Activated CD4-positive, alpha-beta memory T cell treated with anti-CD3 and anti-CD28 coated beads, Interleukin-2, amount 10 ng/mL, durations not matched to agents 7 days and 5 days (primary cell): ENCODE measurements at regions of chr16 and their contacts with region 1.

Region 1: GRCh38 chr16:67935402-67936123 is 1.1 kb downstream of the PSMB10 start:
- DNase-seq: peak; percentile 97
- H3K4me3 Mint-ChIP-seq: peak overlapping the region; percentile 100
- H3K27ac Mint-ChIP-seq: peak overlapping the region; percentile 97
- H3K4me1 Mint-ChIP-seq: peaks cover 44% of the 10 kb centered on the region
- H3K27me3 Mint-ChIP-seq: no peaks in the 10 kb centered on the region

Region 2: DNA sequence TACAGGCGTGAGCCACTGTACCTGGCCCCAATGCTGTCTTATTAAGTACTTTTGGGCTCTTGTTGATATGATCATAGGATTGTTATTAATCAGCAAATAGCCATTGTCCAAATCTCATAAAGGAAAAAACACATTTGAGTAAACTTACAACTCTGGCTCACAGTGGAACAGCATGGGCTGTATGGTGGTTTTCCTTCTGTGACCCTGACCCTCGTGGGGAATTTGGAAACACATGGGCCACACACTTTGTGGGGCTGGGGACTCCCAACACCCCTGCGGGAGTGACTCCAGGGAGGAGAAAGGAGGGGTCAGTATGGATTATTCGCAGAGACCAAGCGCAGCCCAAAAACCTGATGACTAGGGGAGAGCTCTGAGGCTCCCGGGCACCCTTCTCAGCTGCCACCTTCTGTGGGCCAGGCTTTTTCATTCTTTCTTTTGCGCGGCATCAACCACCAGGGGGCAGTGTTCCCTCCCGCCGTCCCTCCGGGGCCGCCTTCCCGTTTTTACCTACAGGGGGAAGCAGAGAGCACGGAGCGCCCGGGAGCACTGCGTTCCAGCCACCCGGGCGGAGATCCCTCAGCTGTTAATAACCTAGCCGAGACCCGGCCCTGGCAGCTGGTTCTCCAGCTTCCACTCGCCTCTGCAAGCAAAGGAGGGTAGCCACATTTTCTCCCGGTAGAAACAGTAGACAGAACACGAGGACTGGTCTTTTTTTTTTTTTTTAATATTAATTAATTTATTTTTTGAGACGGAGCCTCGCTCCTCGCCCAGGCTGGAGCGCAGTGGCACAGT is 119.1 kb before region 1 on chr16:
- CTCF ChIA-PET with region 1: interaction called, 11 read pairs
- POLR2A ChIA-PET with region 1: no interaction called
- DNase-seq: peak; percentile 91
- H3K4me3 Mint-ChIP-seq: no peak overlapping the region
- H3K27ac Mint-ChIP-seq: no peak overlapping the region
- H3K4me1 Mint-ChIP-seq: peaks cover 6% of the 10 kb centered on the region
- H3K27me3 Mint-ChIP-seq: peaks cover 4% of the 10 kb centered on the region

Region 3: DNA sequence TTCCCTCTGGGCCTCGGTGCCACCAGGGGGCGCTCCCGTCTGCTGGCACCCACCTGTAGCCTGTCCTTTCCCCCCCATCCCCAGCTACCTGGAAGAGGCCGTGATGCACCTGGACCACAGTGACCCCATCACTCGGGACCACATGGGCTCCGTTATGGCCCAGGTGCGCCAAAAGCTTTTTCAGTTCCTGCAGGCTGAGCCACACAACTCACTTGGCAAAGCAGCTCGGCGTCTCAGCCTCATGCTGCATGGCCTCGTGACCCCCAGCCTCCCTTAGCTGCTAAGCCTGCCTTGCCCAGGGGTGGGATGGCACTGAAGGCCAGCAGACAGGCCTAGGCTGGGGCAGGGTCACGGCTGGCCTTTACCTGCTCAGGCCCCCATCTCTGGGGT is 51.7 kb before region 1 on chr16:
- CTCF ChIA-PET with region 1: interaction called, 22 read pairs
- POLR2A ChIA-PET with region 1: interaction called, 6 read pairs
- DNase-seq: peak; percentile 71
- H3K4me3 Mint-ChIP-seq: no peak overlapping the region
- H3K27ac Mint-ChIP-seq: no peak overlapping the region
- H3K4me1 Mint-ChIP-seq: no peaks in the 10 kb centered on the region
- H3K27me3 Mint-ChIP-seq: no peaks in the 10 kb centered on the region

Region 4: DNA sequence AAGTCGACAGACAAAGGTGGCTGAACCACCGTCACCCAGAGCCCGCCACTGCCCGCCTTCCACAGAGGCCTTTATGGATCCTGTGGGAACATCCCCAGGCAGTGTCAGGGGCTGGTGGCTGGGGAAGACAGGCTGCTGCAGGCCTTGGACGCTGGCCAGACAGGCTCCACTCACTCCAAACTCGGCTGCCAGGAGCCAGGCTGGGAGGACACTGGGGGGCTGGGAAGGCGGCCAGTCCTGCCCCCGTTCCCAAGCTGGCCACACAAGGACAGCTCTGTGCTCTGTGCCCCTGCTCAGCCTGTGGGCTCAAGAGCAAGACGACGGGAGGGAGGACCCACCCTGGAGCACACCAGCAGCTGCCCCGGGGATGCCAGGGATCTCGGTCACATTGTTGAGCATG is 15.9 kb after region 1 on chr16:
- CTCF ChIA-PET with region 1: interaction called, 10 read pairs
- POLR2A ChIA-PET with region 1: interaction called, 18 read pairs
- DNase-seq: no peak
- H3K4me3 Mint-ChIP-seq: no peak overlapping the region
- H3K27ac Mint-ChIP-seq: no peak overlapping the region
- H3K4me1 Mint-ChIP-seq: peaks cover 4% of the 10 kb centered on the region
- H3K27me3 Mint-ChIP-seq: no peaks in the 10 kb centered on the region

Region 5: DNA sequence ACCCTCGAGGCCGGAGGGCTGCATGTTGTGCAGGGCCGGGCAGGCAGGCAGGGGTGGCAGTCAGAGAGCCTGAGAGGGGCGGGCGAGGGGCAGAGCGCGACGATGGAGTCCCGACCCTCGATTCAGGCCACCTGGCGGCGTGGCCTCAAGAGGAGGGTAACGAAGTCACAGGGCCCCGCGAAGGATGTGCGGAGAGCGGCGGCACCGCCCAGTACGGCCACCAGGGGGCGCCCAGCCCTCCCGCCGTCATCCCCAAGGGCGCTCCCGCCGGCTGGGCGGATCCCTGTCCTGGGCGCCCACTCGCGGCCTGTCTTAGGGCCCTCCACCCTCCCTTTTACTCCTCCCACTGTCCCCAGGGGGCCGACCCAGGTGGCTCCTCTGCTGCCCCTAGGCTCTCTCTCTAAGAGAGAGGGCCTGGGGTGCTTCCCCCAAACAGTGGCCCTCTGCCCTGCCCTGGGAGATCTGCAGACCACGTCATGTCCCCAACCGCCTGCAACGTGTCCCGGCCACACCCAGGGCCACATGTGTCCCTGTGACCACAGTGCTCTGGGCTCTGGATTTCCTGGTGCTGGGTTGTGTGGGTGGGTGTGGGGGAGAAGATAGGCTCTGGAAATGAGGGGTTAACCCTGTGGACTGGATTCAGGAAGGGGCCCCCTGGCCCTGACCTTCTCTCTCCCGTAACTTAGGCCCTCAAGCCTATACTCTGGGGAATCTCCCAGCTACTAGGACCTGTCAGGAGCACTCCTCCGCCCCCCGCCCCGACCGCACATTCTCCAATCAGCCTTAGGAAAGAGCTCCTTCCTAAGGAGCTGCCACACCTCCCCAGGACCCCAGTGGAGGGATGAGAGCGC is 57.9 kb after region 1 on chr16:
- CTCF ChIA-PET with region 1: no interaction called
- POLR2A ChIA-PET with region 1: interaction called, 10 read pairs
- DNase-seq: peak; percentile 85
- H3K4me3 Mint-ChIP-seq: peak overlapping the region; percentile 71
- H3K27ac Mint-ChIP-seq: peak overlapping the region; percentile 97
- H3K4me1 Mint-ChIP-seq: peaks cover 41% of the 10 kb centered on the region
- H3K27me3 Mint-ChIP-seq: no peaks in the 10 kb centered on the region

Region 6: DNA sequence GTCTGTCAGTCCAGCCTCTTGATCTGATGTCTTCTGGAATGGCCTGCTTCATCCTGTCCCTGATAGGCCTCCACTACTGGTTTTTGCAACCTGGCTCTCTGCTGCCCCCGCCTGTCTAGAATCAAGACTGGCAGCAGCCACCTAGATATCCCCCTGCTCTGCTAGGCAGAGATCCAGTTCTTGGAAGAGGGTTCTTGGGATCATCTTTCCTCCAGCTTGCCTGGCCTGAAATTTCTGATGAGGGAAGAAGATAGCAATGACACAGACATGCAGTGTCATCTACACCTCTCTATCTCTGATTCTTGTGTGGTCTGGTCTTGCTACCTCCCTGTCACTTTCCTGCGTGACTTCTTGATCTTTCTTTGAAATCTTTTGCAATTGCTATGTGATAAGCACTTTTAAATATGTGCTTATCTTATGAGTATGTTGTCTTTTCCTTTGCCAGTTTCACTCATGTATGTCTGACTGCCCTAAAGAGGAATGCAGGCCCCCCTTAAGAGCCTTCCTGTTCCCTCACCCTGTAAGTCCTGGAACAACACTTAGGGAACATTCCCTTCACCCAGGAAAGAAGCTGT is 129.3 kb after region 1 on chr16:
- CTCF ChIA-PET with region 1: interaction called, 6 read pairs
- POLR2A ChIA-PET with region 1: interaction called, 17 read pairs
- DNase-seq: peak; percentile 83
- H3K4me3 Mint-ChIP-seq: no peak overlapping the region
- H3K27ac Mint-ChIP-seq: peak overlapping the region; percentile 84
- H3K4me1 Mint-ChIP-seq: peaks cover 88% of the 10 kb centered on the region
- H3K27me3 Mint-ChIP-seq: no peaks in the 10 kb centered on the region